ENCODE measurements at regions of chr3 and their contacts with region 1.

Region 1: GRCh38 chr3:31531992-31532586 is 636 bp upstream of the STT3B start:
- DNase-seq: peak; percentile 99
- ATAC-seq: peak; percentile 88
- H3K4me3 Mint-ChIP-seq: no peak overlapping the region
- H3K27ac Mint-ChIP-seq: peak overlapping the region; percentile 99
- H3K4me1 Mint-ChIP-seq: peaks cover 12% of the 10 kb centered on the region
- H3K27me3 Mint-ChIP-seq: no peaks in the 10 kb centered on the region

Region 2: DNA sequence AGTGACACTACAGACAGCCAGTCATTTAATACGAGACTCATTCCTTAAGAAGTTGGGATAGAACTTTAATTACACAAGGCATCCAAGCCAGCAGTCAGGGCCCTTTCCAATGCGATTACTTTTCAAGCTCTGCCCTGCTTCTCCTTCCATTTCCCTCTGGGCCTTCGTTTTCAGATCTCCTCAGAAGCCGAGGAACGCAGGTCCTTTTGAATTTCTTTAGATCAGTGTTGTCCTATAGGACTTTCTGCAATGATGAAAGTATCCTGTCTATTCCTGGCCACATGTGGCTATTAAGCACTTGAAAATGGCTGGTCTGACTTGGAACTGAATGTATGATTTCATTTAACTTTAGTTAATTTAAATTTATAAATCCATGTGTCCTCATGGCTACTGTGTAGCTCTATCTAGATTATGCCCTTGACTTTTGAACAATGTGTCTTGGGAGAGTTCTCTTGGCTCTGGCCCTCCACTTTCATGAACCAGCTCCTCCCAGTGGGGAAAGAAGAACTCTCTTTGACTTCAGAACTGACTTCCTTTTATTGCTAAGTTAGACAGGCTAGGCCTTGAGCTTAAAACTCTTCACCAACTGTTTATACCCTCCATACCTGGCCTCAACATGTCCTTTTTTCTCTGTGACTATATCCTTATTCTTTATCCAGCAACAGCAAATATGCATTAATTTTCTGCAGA is 903.0 kb before region 1 on chr3:
- CTCF ChIA-PET with region 1: no interaction called
- POLR2A ChIA-PET with region 1: no interaction called
- intact Hi-C with region 1: loop called in 1 of 2 experiments (anchors 10 kb)
- DNase-seq: no peak
- ATAC-seq: no peak
- H3K4me3 Mint-ChIP-seq: peak overlapping the region; percentile 61
- H3K27ac Mint-ChIP-seq: peak overlapping the region; percentile 97
- H3K4me1 Mint-ChIP-seq: peaks cover 96% of the 10 kb centered on the region
- H3K27me3 Mint-ChIP-seq: no peaks in the 10 kb centered on the region

Region 3: GRCh38 chr3:31213869-31214486 is 318.1 kb before region 1 on chr3:
- CTCF ChIA-PET with region 1: interaction called, 8 read pairs
- POLR2A ChIA-PET with region 1: no interaction called
- intact Hi-C with region 1: loop called (anchors 2 to 5 kb)
- DNase-seq: peak; percentile 48
- ATAC-seq: peak; percentile 4
- H3K4me3 Mint-ChIP-seq: no peak overlapping the region
- H3K27ac Mint-ChIP-seq: peak overlapping the region; percentile 82
- H3K4me1 Mint-ChIP-seq: peaks cover 90% of the 10 kb centered on the region
- H3K27me3 Mint-ChIP-seq: no peaks in the 10 kb centered on the region

Region 4: DNA sequence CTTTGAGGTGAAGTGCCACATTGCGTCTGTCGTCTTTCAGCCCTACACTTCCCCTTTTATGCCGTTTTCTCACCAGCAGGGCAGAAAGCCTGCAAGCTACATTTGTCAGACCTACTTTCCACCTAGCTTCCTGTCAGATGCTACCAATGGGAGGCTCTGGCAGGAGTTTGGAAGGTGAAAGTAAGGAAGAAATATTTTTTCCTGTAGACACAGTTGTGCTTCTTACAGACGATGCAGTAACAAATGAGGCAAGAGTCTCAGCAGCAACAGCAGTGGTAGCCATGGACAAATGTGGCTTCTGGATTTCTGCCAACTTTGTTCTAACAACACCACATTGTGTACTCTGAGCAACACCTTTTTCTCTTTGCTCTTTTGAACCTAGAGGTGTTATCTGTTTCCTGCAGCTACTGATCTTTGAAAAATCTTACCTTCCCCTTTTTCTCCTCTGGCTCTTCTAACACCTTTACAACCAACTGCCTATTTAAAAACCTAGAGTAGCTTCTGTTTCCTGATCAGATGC is 70.0 kb before region 1 on chr3:
- CTCF ChIA-PET with region 1: interaction called, 4 read pairs
- POLR2A ChIA-PET with region 1: interaction called, 6 read pairs
- intact Hi-C with region 1: loop called in 1 of 2 experiments (anchors 1 kb)
- DNase-seq: peak; percentile 46
- ATAC-seq: peak; percentile 78
- H3K4me3 Mint-ChIP-seq: peak overlapping the region; percentile 33
- H3K27ac Mint-ChIP-seq: peak overlapping the region; percentile 69
- H3K4me1 Mint-ChIP-seq: peaks cover 58% of the 10 kb centered on the region
- H3K27me3 Mint-ChIP-seq: no peaks in the 10 kb centered on the region

Region 5: GRCh38 chr3:31754575-31755278 is 222.6 kb after region 1 on chr3:
- CTCF ChIA-PET with region 1: no interaction called
- POLR2A ChIA-PET with region 1: no interaction called
- intact Hi-C with region 1: loop called in 1 of 2 experiments (anchors 5 kb)
- DNase-seq: no peak
- ATAC-seq: peak; percentile 57
- H3K4me3 Mint-ChIP-seq: no peak overlapping the region
- H3K27ac Mint-ChIP-seq: peak overlapping the region; percentile 95
- H3K4me1 Mint-ChIP-seq: peaks cover 48% of the 10 kb centered on the region
- H3K27me3 Mint-ChIP-seq: peaks cover 2% of the 10 kb centered on the region